ENCODE measurements at regions of chr1 and their contacts with region 1.

Region 1: GRCh38 chr1:147640553-147641165 is 29.7 kb downstream of the ACP6 start:
- DNase-seq: peak; percentile 51 to 77 (median 67)
- ATAC-seq: peak; percentile 100
- H3K4me3 ChIP-seq: no peak overlapping the region
- H3K4me3 Mint-ChIP-seq: peak overlapping the region in 2 of 10 donors; percentile 43 to 48
- H3K27ac ChIP-seq: no peak overlapping the region
- H3K27ac Mint-ChIP-seq: peak overlapping the region in 3 of 9 donors; percentile 13 to 60 (median 27)
- H3K4me1 ChIP-seq: peaks cover 3 to 11% of the 10 kb centered on the region in 2 donors
- H3K4me1 Mint-ChIP-seq: peaks cover 13 to 40% (median 25%) of the 10 kb centered on the region in 7 donors
- H3K27me3 ChIP-seq: no peaks in the 10 kb centered on the region
- H3K27me3 Mint-ChIP-seq: no peaks in the 10 kb centered on the region

Region 2: GRCh38 chr1:147273409-147274336 is 367.0 kb before region 1 on chr1:
- CTCF ChIA-PET with region 1: no interaction called
- POLR2A ChIA-PET with region 1: no interaction called
- intact Hi-C with region 1: loop called (anchors 5 kb)
- DNase-seq: peak in 7 of 9 donors; percentile 12 to 57 (median 42)
- ATAC-seq: peak; percentile 65
- H3K4me3 ChIP-seq: no peak overlapping the region
- H3K4me3 Mint-ChIP-seq: no peak overlapping the region
- H3K27ac ChIP-seq: no peak overlapping the region
- H3K27ac Mint-ChIP-seq: no peak overlapping the region
- H3K4me1 ChIP-seq: no peaks in the 10 kb centered on the region
- H3K4me1 Mint-ChIP-seq: peaks cover 0 to 6% (median 4%) of the 10 kb centered on the region in 7 donors
- H3K27me3 ChIP-seq: no peaks in the 10 kb centered on the region
- H3K27me3 Mint-ChIP-seq: no peaks in the 10 kb centered on the region

Region 3: GRCh38 chr1:147515046-147515869 is 125.4 kb before region 1 on chr1:
- CTCF ChIA-PET with region 1: interaction called, 38 read pairs
- POLR2A ChIA-PET with region 1: no interaction called
- intact Hi-C with region 1: loop called (anchors 1 kb)
- DNase-seq: peak in 6 of 9 donors; percentile 11 to 37 (median 24)
- ATAC-seq: peak; percentile 42
- H3K4me3 ChIP-seq: no peak overlapping the region
- H3K4me3 Mint-ChIP-seq: no peak overlapping the region
- H3K27ac ChIP-seq: no peak overlapping the region
- H3K27ac Mint-ChIP-seq: peak overlapping the region in 1 of 9 donors; percentile 6
- H3K4me1 ChIP-seq: no peaks in the 10 kb centered on the region
- H3K4me1 Mint-ChIP-seq: peaks cover 0 to 15% (median 6%) of the 10 kb centered on the region in 7 donors
- H3K27me3 ChIP-seq: no peaks in the 10 kb centered on the region
- H3K27me3 Mint-ChIP-seq: peaks cover 0 to 19% (median 3%) of the 10 kb centered on the region in 5 donors

Region 4: DNA sequence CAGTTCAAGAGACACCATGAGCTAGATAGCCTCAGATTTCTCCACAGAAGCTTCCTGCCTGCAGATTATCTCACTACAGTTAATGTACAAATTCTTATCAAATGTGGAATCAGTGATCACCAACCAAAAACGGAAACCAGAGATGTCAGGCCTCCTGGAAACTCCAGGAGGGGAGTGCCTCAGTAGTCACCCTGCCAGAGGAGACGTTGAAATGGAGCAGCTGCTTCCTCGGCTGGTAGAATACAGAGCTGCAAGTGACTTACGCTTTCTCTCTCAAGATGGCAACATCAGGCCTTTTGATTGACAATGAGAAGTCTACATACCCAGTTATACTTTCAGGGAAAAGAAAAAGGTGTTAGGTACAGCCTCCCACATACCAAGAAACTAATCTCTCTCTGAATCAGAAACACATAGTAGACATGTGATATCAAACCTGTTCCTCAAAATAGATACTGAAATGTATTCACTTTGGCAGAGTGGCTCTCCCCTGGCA is 22.5 kb before region 1 on chr1:
- CTCF ChIA-PET with region 1: no interaction called
- POLR2A ChIA-PET with region 1: interaction called, 3 read pairs
- intact Hi-C with region 1: loop called in 1 of 2 experiments (anchors 1 kb)
- DNase-seq: peak in 2 of 9 donors; percentile 3 to 48
- ATAC-seq: peak; percentile 69
- H3K4me3 ChIP-seq: no peak overlapping the region
- H3K4me3 Mint-ChIP-seq: peak overlapping the region in 1 of 10 donors; percentile 36
- H3K27ac ChIP-seq: no peak overlapping the region
- H3K27ac Mint-ChIP-seq: peak overlapping the region; percentile 10 to 83 (median 65)
- H3K4me1 ChIP-seq: peaks cover 0 to 8% of the 10 kb centered on the region in 2 donors
- H3K4me1 Mint-ChIP-seq: peaks cover 2 to 35% (median 20%) of the 10 kb centered on the region in 7 donors
- H3K27me3 ChIP-seq: no peaks in the 10 kb centered on the region
- H3K27me3 Mint-ChIP-seq: no peaks in the 10 kb centered on the region

Region 5: DNA sequence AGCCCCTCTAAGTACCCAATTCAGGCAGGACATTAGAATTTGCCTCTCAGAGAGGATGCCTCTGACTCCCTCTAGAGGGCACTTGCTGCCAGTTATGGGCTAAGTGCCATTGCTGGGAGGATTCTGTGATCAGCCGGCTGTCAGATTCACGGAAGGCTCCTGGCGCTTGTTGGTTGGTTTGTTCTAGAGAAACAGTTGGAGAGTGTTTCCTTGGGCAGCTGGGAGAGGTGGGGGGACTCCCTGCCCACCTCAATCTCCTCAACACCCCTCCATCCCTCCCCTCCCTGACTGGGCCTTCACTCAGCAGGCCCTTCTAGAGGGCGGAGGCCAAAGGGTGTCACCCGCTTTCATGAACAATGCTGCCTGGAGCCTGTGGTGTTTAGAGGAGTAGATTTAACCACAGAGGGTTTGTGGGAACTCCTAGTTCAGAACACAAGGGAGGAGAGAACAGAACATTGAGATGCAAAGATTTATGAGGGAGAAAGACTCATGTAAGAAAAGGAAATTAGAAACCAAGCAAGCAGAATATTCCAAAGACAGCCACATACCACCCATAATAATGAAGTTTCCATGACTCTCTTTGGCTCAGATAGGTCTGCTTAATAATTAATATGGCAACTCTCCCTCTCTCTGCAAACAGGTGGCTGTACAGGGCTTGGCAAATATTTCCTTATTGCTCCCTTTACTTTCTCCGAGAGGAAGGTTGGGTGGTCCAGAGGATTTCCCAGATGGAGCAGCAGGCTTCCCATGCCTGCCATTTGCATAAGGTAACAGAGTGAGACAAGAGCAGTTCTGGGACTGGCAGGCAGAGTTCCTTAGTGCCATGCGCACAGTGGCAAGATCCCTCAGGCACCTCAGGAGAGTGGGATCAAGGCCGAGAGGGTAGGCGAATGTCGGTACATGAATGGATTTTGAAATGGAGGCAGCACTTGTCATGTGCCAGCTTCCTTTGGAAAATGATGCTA is 59.7 kb after region 1 on chr1:
- CTCF ChIA-PET with region 1: interaction called, 4 read pairs
- POLR2A ChIA-PET with region 1: interaction called, 3 read pairs
- intact Hi-C with region 1: loop called (anchors 1 kb)
- DNase-seq: peak; percentile 16 to 66 (median 58)
- ATAC-seq: peak; percentile 91
- H3K4me3 ChIP-seq: no peak overlapping the region
- H3K4me3 Mint-ChIP-seq: peak overlapping the region in 9 of 10 donors; percentile 18 to 77 (median 62)
- H3K27ac ChIP-seq: peak overlapping the region; percentile 29
- H3K27ac Mint-ChIP-seq: peak overlapping the region in 7 of 9 donors; percentile 15 to 78 (median 60)
- H3K4me1 ChIP-seq: peaks cover 0 to 7% of the 10 kb centered on the region in 2 donors
- H3K4me1 Mint-ChIP-seq: peaks cover 6 to 17% (median 15%) of the 10 kb centered on the region in 7 donors
- H3K27me3 ChIP-seq: no peaks in the 10 kb centered on the region
- H3K27me3 Mint-ChIP-seq: peaks cover 4 to 31% (median 11%) of the 10 kb centered on the region in 5 donors